Aorta (tissue), 5 donors: ENCODE measurements at regions of chr3 and their contacts with region 1.

Region 1: DNA sequence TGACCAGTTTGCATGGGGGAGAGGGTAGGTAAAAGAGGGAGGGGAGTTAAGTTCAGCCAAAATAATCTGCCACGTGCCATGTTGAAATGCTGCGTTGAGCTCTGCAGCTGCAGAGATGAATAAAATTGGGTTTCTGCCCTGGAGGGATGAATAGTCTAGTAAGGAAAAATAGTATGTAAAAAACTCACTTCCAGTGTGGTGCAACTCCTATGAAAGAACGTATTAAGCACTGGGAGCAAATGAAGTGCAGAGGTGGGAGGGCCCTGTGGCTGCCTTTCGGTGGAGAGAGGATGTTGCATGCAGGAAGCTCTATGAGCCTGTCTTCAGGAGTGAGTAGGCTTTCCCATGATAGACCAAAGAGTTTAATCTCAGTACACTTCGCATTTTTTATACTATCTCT is 8.6 kb downstream of the CEP63 start:
- DNase-seq: no peak
- ATAC-seq: no peak
- H3K4me3 ChIP-seq: no peak overlapping the region
- H3K27ac ChIP-seq: no peak overlapping the region
- H3K4me1 ChIP-seq: no peaks in the 10 kb centered on the region
- H3K27me3 ChIP-seq: no peaks in the 10 kb centered on the region

Region 2: DNA sequence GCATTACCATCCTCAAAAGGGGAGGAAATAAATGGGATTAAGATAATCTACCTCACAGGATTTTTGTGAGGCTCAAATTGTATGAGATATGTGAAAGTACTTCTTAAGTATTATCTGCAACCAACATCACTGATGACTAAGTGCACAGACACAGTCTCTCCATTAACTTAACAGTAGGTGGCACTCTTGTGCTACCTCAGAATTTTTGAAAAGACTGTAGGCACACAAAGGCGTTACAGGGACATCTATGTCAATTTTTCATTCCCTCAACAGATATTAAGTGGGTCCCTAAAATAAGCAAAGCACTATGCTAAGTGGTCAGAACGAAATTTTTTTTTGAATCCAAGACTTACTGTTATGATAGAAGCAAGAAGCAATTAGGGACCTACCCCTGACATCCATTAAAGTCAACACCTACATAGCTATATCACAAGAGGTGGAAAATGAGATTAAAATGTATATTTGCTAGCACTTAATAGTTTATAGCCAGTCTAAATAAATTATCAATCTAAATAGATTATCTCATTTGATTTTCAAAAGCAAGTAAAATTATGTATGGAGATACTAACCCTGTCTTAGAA is 296.7 kb before region 1 on chr3:
- intact Hi-C with region 1: loop called in 1 of 2 experiments (anchors 5 kb)
- DNase-seq: no peak
- ATAC-seq: peak; percentile 79
- H3K4me3 ChIP-seq: no peak overlapping the region
- H3K27ac ChIP-seq: no peak overlapping the region
- H3K4me1 ChIP-seq: no peaks in the 10 kb centered on the region
- H3K27me3 ChIP-seq: no peaks in the 10 kb centered on the region